Activated CD8-positive, alpha-beta T cell treated with anti-CD3 and anti-CD28 coated beads, Interleukin-2, amount 10 ng/mL, durations not matched to agents 7 days and 5 days (primary cell): ENCODE measurements at regions of chr4 and their contacts with region 1.

Region 1: DNA sequence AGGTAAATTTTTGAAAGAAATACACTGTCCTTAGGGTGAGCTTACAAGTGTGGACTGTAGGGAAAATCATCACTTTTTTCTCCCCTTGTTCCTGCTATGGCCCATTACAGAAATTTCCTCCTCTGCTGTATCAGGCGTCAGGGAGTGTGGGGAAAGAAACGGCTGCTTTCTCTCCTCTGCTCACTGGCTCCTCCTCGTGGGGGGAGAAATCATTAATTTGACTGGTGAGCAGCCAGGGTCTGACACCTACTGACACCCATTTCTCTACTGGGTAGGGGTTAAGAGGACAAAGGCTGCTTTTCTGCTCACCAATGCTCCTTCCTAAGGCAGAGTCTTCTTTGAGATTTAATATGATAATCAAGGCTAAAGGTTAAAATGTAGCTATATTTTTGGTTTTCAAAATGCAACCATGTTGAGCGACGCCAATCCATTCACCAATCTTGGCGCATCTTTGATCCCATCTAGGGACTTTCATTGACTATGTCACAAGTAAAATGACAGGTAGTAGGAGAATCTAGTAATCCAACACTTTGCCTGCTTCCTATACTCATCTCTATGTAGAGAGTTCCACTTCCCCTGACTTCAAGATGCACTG is 25.1 kb downstream of the SETD7 start:
- DNase-seq: peak; percentile 71
- ATAC-seq: peak; percentile 65
- H3K4me3 Mint-ChIP-seq: no peak overlapping the region
- H3K27ac Mint-ChIP-seq: no peak overlapping the region
- H3K4me1 Mint-ChIP-seq: peaks cover 11% of the 10 kb centered on the region
- H3K27me3 Mint-ChIP-seq: no peaks in the 10 kb centered on the region

Region 2: DNA sequence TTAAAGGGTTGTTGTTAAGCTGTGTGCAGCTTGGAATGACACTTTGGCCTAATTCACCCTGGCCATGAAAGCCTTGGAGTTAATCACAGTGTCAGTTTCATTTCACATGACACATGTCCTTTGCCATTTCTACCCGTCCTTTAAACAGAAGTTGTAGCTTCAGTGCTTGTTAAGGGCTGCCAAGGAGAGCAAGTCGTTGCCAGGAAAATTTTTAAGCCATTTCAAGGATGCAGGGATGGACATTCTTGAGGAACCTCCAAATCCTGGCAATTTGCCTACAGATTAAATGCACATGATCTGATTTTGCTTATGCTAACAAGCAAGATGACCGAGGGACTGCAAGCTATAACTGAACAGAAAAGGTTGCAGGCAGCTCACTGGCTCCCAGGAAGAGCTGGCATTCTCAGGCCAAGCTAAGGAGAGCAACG is 15.4 kb before region 1 on chr4:
- CTCF ChIA-PET with region 1: interaction called, 12 read pairs
- POLR2A ChIA-PET with region 1: interaction called, 4 read pairs
- DNase-seq: no peak
- ATAC-seq: no peak
- H3K4me3 Mint-ChIP-seq: no peak overlapping the region
- H3K27ac Mint-ChIP-seq: no peak overlapping the region
- H3K4me1 Mint-ChIP-seq: no peaks in the 10 kb centered on the region
- H3K27me3 Mint-ChIP-seq: no peaks in the 10 kb centered on the region